ENCODE measurements at regions of chr5 and their contacts with region 1.

Region 1: GRCh38 chr5:10563945-10564837 is at the start of gene ANKRD33B:
- DNase-seq: peak in 1 of 2 donors; percentile 79
- H3K4me3 ChIP-seq: peak within 1 kb of the TSS; percentile 72 to 76
- H3K27ac ChIP-seq: peak within 1 kb of the TSS; percentile 50 to 80
- H3K4me1 ChIP-seq: peaks cover 0 to 21% of the 10 kb centered on the region in 2 donors
- H3K27me3 ChIP-seq: no peaks in the 10 kb centered on the region
- CTCF ChIP-seq: no peak
- total RNA-seq, gene ANKRD33B: 7.2 TPM

Region 2: DNA sequence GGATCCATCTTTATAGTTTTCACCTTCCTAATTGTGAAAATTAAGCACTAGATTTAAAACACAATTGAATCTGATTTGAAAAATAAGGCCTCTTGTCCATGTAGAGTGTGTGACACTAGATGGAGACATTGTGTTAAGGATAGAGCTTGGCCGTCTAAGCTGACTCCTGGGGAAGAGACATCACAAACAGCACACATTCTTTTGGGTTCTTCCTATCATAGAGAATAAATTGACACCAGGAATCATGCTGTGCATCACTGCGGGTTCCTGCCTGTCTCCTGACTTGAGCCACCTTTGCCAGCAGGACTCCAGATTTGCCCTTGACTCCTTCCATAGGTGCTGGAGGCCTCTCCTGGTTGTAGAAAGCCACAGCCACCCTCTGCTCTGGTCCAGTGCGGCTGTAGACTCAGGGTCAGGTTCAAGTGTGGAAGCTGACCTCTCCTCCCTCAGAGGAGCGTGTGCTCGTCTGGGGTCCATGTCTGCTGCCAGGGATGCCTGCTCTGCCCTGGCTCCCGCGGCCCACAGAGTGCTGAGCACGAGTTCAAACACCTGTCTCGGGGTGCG is 111.3 kb before region 1 on chr5:
- intact Hi-C with region 1: loop called (anchors 5 kb)
- DNase-seq: no peak
- H3K4me3 ChIP-seq: no peak overlapping the region
- H3K27ac ChIP-seq: peak overlapping the region in 1 of 2 donors; percentile 1
- H3K4me1 ChIP-seq: peaks cover 0 to 15% of the 10 kb centered on the region in 2 donors
- H3K27me3 ChIP-seq: no peaks in the 10 kb centered on the region
- CTCF ChIP-seq: peak; percentile 63 to 74 (median 70)

Region 3: GRCh38 chr5:10601246-10602030 is 37.2 kb after region 1 on chr5:
- intact Hi-C with region 1: loop called (anchors 5 kb)
- DNase-seq: peak; percentile 62 to 91
- H3K4me3 ChIP-seq: peak overlapping the region in 1 of 2 donors; percentile 47
- H3K27ac ChIP-seq: peak overlapping the region; percentile 72 to 82
- H3K4me1 ChIP-seq: peaks cover 2 to 27% of the 10 kb centered on the region in 2 donors
- H3K27me3 ChIP-seq: no peaks in the 10 kb centered on the region
- CTCF ChIP-seq: no peak

Measured in ascending aorta (tissue), 2 donors.